Gastrocnemius medialis (tissue), 4 donors: ENCODE measurements at regions of chr6 and their contacts with region 1.

Region 1: DNA sequence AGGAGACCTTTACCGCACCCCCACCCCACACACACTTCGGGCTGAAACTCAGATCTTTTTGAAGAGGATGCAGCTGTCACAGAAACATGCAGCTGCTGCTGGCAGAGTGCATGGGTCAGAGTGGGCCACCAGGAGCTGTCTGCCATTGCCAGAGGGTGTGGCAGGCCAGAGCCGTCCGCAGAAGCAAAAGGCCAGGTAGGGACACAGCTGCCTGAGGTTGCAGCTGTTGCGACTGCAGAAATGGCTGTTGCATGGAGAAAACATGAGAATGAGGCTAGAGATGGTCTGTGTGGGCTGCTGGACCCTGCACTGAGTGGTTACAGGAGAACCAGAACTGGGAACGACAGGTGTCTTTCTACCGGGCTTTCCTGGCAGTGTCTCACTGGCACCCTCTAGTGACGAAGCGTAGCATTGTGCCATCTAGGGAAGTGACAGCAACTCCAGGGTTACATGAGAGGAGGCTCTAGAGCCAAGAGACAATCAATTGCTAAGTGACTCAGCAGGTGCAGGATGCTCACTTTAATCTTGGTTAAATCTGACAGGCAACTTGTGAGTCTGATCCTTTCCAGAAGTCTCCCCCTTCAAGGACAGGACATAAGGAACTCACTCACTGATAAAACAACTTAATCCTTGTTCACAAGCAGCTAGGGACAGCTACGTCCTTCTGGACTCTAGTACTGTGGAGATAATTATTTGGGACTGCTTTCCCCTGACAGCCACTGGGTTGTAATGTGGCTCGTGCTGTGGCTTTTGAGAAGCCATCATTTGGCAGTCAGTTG is 29.1 kb upstream of the SERPINB9 start:
- DNase-seq: peak; percentile 72 to 88
- ATAC-seq: peak; percentile 99 to 100
- H3K4me3 ChIP-seq: peak overlapping the region in 1 of 4 donors; percentile 6
- H3K27ac ChIP-seq: peak overlapping the region; percentile 33 to 59 (median 54)
- H3K4me1 ChIP-seq: peaks cover 4 to 5% of the 10 kb centered on the region in 2 donors
- H3K27me3 ChIP-seq: no peaks in the 10 kb centered on the region
- CTCF ChIP-seq: peak; percentile 87 to 98 (median 91)
- POLR2A ChIP-seq: no peak

Region 2: GRCh38 chr6:2695454-2696095 is 236.6 kb before region 1 on chr6:
- in situ Hi-C with region 1: no loop called
- intact Hi-C with region 1: no loop called
- DNase-seq: no peak
- ATAC-seq: peak; percentile 55 to 70
- H3K4me3 ChIP-seq: no peak overlapping the region
- H3K27ac ChIP-seq: no peak overlapping the region
- H3K4me1 ChIP-seq: no peaks in the 10 kb centered on the region
- H3K27me3 ChIP-seq: no peaks in the 10 kb centered on the region
- CTCF ChIP-seq: peak in 1 of 5 experiments; percentile 31
- POLR2A ChIP-seq: no peak

Region 3: GRCh38 chr6:2783188-2783963 is 148.8 kb before region 1 on chr6:
- in situ Hi-C with region 1: loop called in 2 of 4 experiments (anchors 10 kb)
- intact Hi-C with region 1: no loop called
- DNase-seq: no peak
- ATAC-seq: no peak
- H3K4me3 ChIP-seq: no peak overlapping the region
- H3K27ac ChIP-seq: no peak overlapping the region
- H3K4me1 ChIP-seq: peaks cover 18 to 24% of the 10 kb centered on the region in 2 donors
- H3K27me3 ChIP-seq: no peaks in the 10 kb centered on the region
- CTCF ChIP-seq: no peak
- POLR2A ChIP-seq: no peak

Region 4: GRCh38 chr6:2791124-2791974 is 140.8 kb before region 1 on chr6:
- in situ Hi-C with region 1: loop called in 2 of 4 experiments (anchors 10 kb)
- intact Hi-C with region 1: loop called (anchors 1 kb)
- DNase-seq: peak; percentile 61 to 78
- ATAC-seq: peak; percentile 84 to 85
- H3K4me3 ChIP-seq: peak overlapping the region in 3 of 4 donors; percentile 24 to 29 (median 27)
- H3K27ac ChIP-seq: peak overlapping the region; percentile 78 to 80 (median 79)
- H3K4me1 ChIP-seq: peaks cover 23 to 31% of the 10 kb centered on the region in 2 donors
- H3K27me3 ChIP-seq: no peaks in the 10 kb centered on the region
- CTCF ChIP-seq: peak; percentile 74 to 84 (median 78)
- POLR2A ChIP-seq: no peak

Region 5: GRCh38 chr6:3026791-3027626 is 94.8 kb after region 1 on chr6:
- in situ Hi-C with region 1: no loop called
- intact Hi-C with region 1: no loop called
- DNase-seq: no peak
- ATAC-seq: no peak
- H3K4me3 ChIP-seq: no peak overlapping the region
- H3K27ac ChIP-seq: peak overlapping the region in 1 of 4 donors; percentile 95
- H3K4me1 ChIP-seq: peaks cover 22 to 23% of the 10 kb centered on the region in 2 donors
- H3K27me3 ChIP-seq: no peaks in the 10 kb centered on the region
- CTCF ChIP-seq: no peak
- POLR2A ChIP-seq: no peak

Region 6: GRCh38 chr6:3390698-3391097 is 458.5 kb after region 1 on chr6:
- in situ Hi-C with region 1: no loop called
- intact Hi-C with region 1: no loop called
- DNase-seq: peak; percentile 34 to 65
- ATAC-seq: peak; percentile 21 to 43
- H3K4me3 ChIP-seq: no peak overlapping the region
- H3K27ac ChIP-seq: peak overlapping the region in 3 of 4 donors; percentile 26 to 36 (median 31)
- H3K4me1 ChIP-seq: peaks cover 4% of the 10 kb centered on the region in 2 donors
- H3K27me3 ChIP-seq: no peaks in the 10 kb centered on the region
- CTCF ChIP-seq: no peak
- POLR2A ChIP-seq: no peak